Heart right ventricle (tissue), 16 donors: ENCODE measurements at regions of chr9 and their contacts with region 1.

Region 1: DNA sequence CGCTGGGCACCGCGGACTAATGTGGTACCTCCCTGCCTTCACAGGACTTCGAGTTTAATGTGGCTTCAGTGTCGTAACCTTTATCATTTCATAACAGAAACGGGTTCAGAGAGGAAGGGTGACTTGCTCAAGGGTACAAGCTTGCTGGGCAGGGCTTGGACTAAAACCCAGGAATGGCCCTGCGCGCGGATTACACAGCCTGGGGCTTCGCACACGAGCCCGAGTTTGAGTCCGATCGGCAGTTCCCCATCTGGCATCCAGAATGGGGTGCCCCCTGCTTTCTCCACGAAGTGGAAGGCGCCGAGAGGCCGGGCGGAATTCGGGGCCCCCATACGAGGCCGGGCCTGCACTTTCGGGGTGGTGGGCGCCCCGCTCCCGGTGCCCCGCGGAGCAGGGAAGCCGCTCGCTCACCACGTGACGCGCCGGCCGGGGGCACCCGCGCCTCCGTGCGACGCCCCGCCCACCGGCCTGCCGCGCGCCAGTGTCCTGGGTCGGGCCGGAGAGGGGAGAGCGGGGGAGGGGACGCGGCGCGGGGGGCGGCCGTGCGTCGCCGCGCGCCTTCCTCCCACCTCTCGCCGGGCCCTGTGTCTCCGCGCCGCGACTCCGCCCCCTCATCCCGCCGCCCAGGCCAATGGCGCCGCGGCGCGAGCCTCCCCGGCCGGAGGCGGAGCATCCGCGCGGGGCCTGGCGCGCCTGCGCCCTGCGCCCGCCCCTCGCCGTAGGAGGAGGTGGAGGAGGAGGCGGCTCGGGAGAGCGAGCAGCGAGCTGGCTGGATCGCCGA is at the start of gene SET:
- DNase-seq: peak; percentile 95 to 97
- ATAC-seq: peak; percentile 88 to 97 (median 94)
- H3K4me3 ChIP-seq: peak within 1 kb of the TSS; percentile 58 to 91 (median 78)
- H3K27ac ChIP-seq: peak within 1 kb of the TSS; percentile 89 to 98 (median 98)
- H3K4me1 ChIP-seq: peaks cover 10 to 57% (median 32%) of the 10 kb centered on the region in 9 donors
- H3K27me3 ChIP-seq: no peaks in the 10 kb centered on the region
- CTCF ChIP-seq: no peak
- total RNA-seq, gene SET: 183 to 228 (median 202) TPM

Region 2: DNA sequence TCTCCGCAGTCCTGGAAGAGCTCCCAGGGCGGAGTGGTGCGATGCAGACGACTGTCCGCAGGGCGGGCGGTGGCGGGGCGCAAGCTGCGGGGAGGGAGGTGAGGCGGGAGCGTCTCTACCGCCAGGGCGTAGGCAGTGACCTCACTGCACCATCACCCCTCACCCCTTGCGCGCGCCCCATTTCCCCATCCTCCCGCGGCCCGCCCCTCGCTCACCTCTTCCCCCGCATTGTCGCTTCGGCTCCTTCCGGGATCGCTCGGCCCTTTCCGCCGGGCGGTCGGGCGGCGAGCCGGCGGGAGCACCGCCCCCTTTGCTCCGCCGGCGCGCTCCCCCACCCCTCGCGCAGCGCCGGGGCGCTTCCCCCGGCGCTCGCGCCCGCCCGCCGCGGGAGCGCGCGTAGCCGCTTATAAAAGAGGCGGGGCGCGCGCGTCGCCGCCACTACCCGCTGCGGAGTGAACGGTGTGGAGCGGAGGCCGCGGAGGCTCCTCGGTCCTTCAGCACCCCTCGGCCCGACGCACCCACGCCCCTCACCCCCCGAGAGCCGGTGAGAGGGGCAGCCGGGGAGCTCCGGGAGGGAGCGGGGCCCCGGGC is 136.5 kb before region 1 on chr9 and contains the start of gene SPTAN1:
- intact Hi-C with region 1: loop called in 1 of 10 experiments (anchors 5 kb)
- DNase-seq: peak; percentile 92 to 94
- ATAC-seq: peak; percentile 85 to 94 (median 91)
- H3K4me3 ChIP-seq: peak within 1 kb of the TSS; percentile 88 to 100 (median 97)
- H3K27ac ChIP-seq: peak within 1 kb of the TSS; percentile 94 to 100 (median 99)
- H3K4me1 ChIP-seq: peaks cover 11 to 72% (median 60%) of the 10 kb centered on the region in 9 donors
- H3K27me3 ChIP-seq: no peaks in the 10 kb centered on the region
- CTCF ChIP-seq: peak in 3 of 9 donors; percentile 7 to 10 (median 8)
- total RNA-seq, gene SPTAN1: 250 to 449 (median 379) TPM

Region 3: GRCh38 chr9:128635283-128636023 is 53.2 kb before region 1 on chr9:
- intact Hi-C with region 1: loop called in 4 of 10 experiments (anchors 5 to 10 kb)
- DNase-seq: peak; percentile 86 to 88
- ATAC-seq: peak; percentile 84 to 93 (median 92)
- H3K4me3 ChIP-seq: peak overlapping the region; percentile 18 to 44 (median 38)
- H3K27ac ChIP-seq: peak overlapping the region; percentile 78 to 97 (median 96)
- H3K4me1 ChIP-seq: peaks cover 13 to 35% (median 20%) of the 10 kb centered on the region in 9 donors
- H3K27me3 ChIP-seq: no peaks in the 10 kb centered on the region
- CTCF ChIP-seq: peak; percentile 47 to 84 (median 78)

Region 4: DNA sequence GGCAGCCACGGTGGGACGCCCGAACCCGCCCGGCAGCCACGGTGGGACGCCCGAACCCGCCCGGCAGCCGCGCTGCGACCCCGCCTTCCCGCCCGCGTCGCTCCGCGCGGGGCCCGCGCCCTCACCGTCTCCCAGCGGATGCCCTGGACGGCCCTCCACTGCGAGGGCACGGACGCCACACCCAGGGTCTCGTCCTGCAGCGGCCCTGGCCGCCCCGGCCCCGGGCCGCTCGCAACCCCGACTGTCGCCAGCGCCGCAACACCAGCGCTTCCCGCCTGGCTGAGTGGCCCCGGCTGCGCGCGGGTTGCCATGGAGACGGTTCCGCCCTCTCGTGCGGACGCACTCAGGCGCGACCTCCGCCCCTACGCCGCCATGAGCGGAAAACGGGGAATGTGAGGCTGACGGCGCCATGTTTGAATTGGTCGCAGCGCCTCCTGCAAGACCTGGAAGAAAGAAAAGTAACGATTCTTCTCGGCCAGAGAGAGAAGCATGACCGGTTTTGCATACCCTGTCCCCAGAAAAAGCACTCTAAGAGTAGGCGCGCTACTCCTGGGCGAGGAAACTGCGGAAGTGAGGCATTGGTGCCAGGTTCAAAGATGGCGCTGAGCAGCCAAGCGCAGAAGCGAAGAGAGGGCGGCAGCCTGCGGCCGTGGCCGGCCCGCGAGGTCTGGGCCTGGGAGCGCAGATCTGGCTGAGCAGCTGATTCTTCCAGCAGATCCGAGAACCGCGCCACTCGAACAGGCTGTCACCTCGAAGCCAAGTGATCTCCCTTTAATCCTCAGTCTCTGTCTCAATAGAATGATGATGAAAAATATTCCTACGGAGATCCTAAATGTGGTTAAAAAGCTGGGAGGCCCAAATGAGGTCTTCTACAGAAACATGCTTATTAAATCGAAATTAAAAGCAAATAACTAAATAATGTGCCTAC is 32.0 kb before region 1 on chr9 and contains the start of gene DYNC2I2:
- intact Hi-C with region 1: loop called in 2 of 10 experiments (anchors 2 kb)
- DNase-seq: peak; percentile 97 to 98
- ATAC-seq: peak; percentile 97 to 100 (median 100)
- H3K4me3 ChIP-seq: peak within 1 kb of the TSS; percentile 39 to 72 (median 64)
- H3K27ac ChIP-seq: peak within 1 kb of the TSS; percentile 90 to 100 (median 98)
- H3K4me1 ChIP-seq: peaks cover 0 to 15% (median 11%) of the 10 kb centered on the region in 9 donors
- H3K27me3 ChIP-seq: no peaks in the 10 kb centered on the region
- CTCF ChIP-seq: no peak
- total RNA-seq, gene DYNC2I2: 22.1 to 44.8 (median 30.1) TPM

Region 5: DNA sequence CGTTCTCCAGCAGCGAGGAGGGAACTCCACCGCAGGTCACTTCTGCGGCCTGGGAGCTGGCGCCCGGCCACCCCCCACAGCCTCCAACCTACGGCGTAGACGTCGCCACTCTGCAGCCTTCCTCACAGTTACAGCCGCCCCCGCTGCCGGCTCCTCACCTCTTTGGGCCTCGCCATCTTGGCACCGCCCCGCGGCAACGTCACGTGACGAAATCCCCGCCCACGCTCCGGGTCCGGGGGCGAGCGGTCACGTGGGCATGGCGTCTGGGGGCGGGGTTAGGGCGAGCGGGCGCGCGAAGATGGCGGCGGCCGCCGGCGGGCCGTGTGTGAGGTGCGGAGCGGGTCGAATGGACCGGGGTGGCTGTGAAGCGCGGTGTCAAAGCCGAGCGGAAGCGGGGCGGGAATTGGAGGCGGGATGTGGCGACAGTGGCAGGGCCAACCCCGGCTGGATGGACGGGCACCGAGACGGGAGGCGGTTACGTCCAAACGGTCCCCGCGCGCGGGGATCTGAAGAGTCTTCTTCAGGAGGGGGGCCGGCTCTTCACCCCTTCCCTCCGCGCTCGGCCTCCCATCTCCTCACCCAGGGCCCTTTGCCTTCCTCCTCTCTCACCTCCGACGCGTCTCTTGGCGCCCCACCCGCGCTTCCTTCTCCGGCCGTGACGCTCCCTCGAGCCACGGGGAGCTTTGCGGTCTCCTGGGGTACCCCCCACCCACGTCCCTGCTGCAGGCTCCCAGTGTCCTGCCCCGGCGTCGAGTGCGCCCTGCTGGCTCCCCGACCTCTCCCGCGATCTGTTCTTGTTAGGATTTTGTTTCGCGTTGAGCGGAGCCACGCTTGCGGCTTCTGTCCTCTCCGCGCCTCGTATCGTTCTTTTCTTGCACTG is 259.0 kb after region 1 on chr9 and contains the starts of genes DOLK and NUP188:
- intact Hi-C with region 1: loop called in 1 of 10 experiments (anchors 10 kb)
- DNase-seq: peak; percentile 97 to 99
- ATAC-seq: peak; percentile 89 to 96 (median 94)
- H3K4me3 ChIP-seq: peak within 1 kb of the TSS; percentile 73 to 96 (median 85)
- H3K27ac ChIP-seq: peak within 1 kb of the TSS; percentile 73 to 96 (median 93)
- H3K4me1 ChIP-seq: peaks cover 9 to 45% (median 30%) of the 10 kb centered on the region in 9 donors
- H3K27me3 ChIP-seq: no peaks in the 10 kb centered on the region
- CTCF ChIP-seq: no peak
- total RNA-seq, gene DOLK: 6.0 to 12.0 (median 8.8) TPM
- total RNA-seq, gene NUP188: 16.1 to 27.3 (median 20.6) TPM

Region 6: GRCh38 chr9:129626079-129626624 is 937.5 kb after region 1 on chr9 and contains the start of gene NTMT1:
- intact Hi-C with region 1: loop called in 1 of 10 experiments (anchors 5 kb)
- DNase-seq: peak; percentile 85 to 90
- ATAC-seq: peak; percentile 91 to 95 (median 94)
- H3K4me3 ChIP-seq: peak within 1 kb of the TSS; percentile 58 to 90 (median 79)
- H3K27ac ChIP-seq: peak within 1 kb of the TSS; percentile 79 to 98 (median 94)
- H3K4me1 ChIP-seq: peaks cover 19 to 61% (median 53%) of the 10 kb centered on the region in 9 donors
- H3K27me3 ChIP-seq: peaks cover 0 to 9% (median 0%) of the 10 kb centered on the region in 7 donors
- CTCF ChIP-seq: no peak
- total RNA-seq, gene NTMT1: 54.0 to 84.2 (median 61.9) TPM